Activated CD4-positive, alpha-beta memory T cell treated with anti-CD3 and anti-CD28 coated beads for 36 hours (primary cell): ENCODE measurements at regions of chr1 and their contacts with region 1.

Region 1: GRCh38 chr1:59432531-59433439 is 135.9 kb downstream of the FGGY start:
- DNase-seq: peak; percentile 15
- H3K4me3 Mint-ChIP-seq: no peak overlapping the region
- H3K27ac Mint-ChIP-seq: peak overlapping the region; percentile 19
- H3K4me1 Mint-ChIP-seq: peaks cover 27% of the 10 kb centered on the region
- H3K27me3 Mint-ChIP-seq: no peaks in the 10 kb centered on the region

Region 2: DNA sequence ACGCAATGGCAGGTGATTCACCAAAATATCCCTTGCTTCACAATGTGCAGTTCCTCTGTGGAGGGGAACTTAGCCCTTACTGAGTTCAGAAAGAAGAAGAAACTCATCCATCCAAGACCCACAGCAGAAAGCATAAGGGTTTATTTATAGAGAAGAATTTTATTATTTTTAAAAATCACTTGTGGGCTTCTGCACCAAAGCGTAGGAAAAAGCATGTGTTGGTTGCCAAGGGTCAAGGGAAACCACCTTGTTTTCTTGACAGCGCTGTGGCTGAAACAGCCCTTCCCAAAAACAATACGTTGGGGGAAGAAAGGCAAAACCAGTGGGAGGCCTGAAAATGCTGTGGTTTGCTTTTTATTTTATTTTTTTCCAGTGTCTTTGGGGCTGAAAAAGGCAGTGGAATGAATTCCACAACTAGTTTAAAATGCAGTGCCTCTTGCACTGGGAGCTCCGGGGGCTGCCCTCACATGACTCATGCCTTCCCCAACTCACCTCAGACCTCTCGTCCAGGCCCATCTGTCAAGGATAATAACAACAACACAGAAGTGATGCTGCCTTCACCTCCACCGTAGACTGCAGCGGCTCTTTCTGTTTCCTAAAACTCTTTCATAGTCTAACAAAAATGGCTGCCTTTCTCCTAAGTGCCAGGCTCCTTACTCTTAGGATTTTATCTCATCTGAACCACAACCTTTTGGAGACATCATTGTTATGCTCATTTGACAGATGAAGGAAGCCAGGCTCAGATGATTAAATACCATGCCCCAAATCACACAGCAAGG is 424.8 kb before region 1 on chr1:
- CTCF ChIA-PET with region 1: no interaction called
- POLR2A ChIA-PET with region 1: no interaction called
- intact Hi-C with region 1: loop called (anchors 5 kb)
- DNase-seq: peak; percentile 64
- H3K4me3 Mint-ChIP-seq: no peak overlapping the region
- H3K27ac Mint-ChIP-seq: peak overlapping the region; percentile 59
- H3K4me1 Mint-ChIP-seq: peaks cover 43% of the 10 kb centered on the region
- H3K27me3 Mint-ChIP-seq: peaks cover 4% of the 10 kb centered on the region

Region 3: DNA sequence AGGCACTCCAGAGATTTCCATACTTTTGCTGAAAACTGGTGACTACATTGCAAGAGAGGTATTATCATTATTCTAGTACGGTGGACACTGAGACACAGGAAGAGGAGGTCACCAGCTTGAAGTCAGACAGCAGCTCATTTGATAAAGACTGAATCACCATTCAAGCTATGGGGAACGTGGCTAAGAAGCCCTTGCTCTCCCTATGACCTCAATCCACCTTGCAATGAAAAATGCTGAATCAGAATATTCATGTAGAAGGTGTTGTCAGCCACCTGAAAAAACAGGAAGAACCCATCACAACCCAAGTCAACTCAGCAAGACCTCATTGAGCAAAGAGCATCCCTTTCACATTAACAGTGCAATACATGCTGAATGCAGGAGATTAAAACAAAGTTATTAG is 194.9 kb before region 1 on chr1:
- CTCF ChIA-PET with region 1: no interaction called
- POLR2A ChIA-PET with region 1: no interaction called
- intact Hi-C with region 1: no loop called
- DNase-seq: no peak
- H3K4me3 Mint-ChIP-seq: no peak overlapping the region
- H3K27ac Mint-ChIP-seq: no peak overlapping the region
- H3K4me1 Mint-ChIP-seq: no peaks in the 10 kb centered on the region
- H3K27me3 Mint-ChIP-seq: peaks cover 1% of the 10 kb centered on the region

Region 4: GRCh38 chr1:59332983-59333382 is 99.8 kb before region 1 on chr1:
- CTCF ChIA-PET with region 1: no interaction called
- POLR2A ChIA-PET with region 1: no interaction called
- intact Hi-C with region 1: loop called (anchors 1 kb)
- DNase-seq: peak; percentile 46
- H3K4me3 Mint-ChIP-seq: no peak overlapping the region
- H3K27ac Mint-ChIP-seq: peak overlapping the region; percentile 54
- H3K4me1 Mint-ChIP-seq: peaks cover 28% of the 10 kb centered on the region
- H3K27me3 Mint-ChIP-seq: no peaks in the 10 kb centered on the region

Region 5: DNA sequence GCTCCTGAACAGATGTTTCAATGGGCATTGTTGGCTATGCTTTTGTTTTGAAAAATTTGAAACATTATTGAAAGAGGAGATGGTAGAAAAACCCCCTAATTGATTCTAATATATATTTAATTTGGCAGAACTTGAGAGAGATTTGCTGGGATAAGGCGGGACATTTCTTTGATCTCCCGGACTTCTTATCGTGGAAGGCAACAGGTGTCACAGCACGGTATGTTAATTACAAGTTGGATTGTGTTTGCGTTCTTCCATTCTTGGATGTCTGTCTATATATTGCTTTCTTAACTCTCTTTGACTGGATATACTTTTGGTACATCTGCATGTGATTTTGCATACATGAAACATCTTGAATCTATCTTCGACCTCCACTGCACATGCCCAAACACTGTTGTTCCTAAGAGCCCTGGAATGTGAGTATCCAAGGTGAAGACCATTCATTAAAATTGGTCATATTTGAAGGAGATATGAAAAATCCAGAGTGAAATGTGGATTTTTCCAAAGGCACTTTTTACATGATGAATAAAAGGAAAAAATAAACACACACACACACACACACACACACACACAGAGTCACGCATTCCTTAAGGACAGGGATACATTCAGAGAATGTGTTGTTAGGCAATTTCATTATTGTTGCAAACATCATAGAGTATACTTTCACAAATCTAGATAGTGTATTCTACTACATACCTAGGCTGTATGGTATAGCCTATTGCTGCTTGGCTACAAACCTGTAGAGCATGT is 54.0 kb before region 1 on chr1:
- CTCF ChIA-PET with region 1: no interaction called
- POLR2A ChIA-PET with region 1: no interaction called
- intact Hi-C with region 1: loop called (anchors 1 kb)
- DNase-seq: no peak
- H3K4me3 Mint-ChIP-seq: no peak overlapping the region
- H3K27ac Mint-ChIP-seq: no peak overlapping the region
- H3K4me1 Mint-ChIP-seq: no peaks in the 10 kb centered on the region
- H3K27me3 Mint-ChIP-seq: no peaks in the 10 kb centered on the region

Region 6: GRCh38 chr1:59404796-59405195 is 28.0 kb before region 1 on chr1:
- CTCF ChIA-PET with region 1: no interaction called
- POLR2A ChIA-PET with region 1: no interaction called
- intact Hi-C with region 1: no loop called
- DNase-seq: no peak
- H3K4me3 Mint-ChIP-seq: no peak overlapping the region
- H3K27ac Mint-ChIP-seq: no peak overlapping the region
- H3K4me1 Mint-ChIP-seq: no peaks in the 10 kb centered on the region
- H3K27me3 Mint-ChIP-seq: no peaks in the 10 kb centered on the region

Region 7: DNA sequence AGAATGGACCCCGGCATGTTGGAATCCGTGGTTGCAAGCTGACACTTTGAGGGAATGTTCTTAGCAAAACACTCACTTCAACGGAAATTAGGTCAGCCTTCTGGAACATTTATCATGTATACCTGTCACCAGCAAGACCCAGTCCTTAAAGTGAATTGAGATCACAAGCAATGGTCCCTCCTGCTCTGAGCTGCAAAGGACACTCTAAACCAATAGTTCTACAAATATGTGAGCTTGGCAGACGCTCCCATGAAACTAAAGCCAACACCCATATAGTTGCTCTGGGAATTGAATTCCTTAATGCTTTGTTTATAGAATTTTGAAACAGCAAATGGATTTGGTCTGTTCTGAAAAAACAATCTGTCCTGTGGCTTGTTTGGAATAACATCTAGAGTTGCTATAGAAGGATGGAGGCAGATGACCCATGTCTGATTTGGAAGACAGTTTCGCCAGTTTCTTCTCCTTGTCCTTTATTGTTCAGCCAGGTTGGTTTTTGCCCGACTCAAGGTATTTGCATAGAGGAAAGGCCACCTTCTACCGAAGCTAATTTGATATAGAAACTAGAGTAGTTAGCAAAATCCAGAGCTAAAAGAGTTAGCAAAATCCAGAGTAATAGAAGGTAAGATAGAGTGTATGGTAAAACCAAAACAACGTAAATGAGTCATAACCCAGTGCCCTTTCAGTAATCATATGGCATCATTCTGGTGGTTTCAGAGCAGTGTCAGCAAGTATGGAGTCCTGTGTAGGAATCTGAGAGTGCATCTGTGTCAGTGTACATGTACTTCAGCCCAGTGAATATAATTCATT is 1885.7 kb after region 1 on chr1:
- CTCF ChIA-PET with region 1: no interaction called
- POLR2A ChIA-PET with region 1: no interaction called
- intact Hi-C with region 1: loop called (anchors 2 kb)
- DNase-seq: peak; percentile 44
- H3K4me3 Mint-ChIP-seq: peak overlapping the region; percentile 42
- H3K27ac Mint-ChIP-seq: peak overlapping the region; percentile 88
- H3K4me1 Mint-ChIP-seq: peaks cover 48% of the 10 kb centered on the region
- H3K27me3 Mint-ChIP-seq: peaks cover 2% of the 10 kb centered on the region